ENCODE measurements at regions of chr3 and their contacts with region 1.

Region 1: DNA sequence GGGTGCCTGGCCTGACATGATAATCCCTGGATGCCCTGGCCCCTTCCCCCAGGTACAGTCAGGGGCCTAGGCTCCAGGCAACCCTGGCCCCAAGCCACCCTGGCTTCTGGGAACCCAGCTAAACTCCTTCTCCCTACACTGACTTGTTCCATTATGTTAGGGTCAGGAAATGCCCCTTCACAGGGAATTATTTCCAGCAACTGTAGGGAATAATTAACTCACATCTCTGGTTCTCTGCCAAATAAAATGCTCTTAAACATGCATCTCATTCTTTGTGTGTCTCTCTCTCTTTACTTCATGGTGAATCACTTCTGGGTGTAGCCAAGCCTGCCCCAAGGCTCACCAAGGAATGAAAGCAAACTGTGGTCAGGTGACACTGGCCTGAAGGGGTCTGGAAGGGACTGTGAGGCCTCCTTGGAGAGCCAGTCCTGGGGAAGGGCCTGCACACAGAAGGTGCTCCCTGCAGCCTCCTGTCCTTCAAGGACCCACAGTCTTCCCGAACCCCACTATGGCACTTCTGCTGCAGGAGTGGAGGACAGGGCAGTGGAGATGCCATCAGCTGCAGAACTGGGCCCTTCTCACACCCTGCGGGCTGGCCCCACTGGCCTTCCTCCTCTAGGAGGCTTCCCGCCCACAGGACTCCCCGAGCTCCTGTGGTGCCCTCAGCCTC is 17.6 kb downstream of the TKT start:
- DNase-seq: peak; percentile 98
- ATAC-seq: peak; percentile 89
- H3K4me3 ChIP-seq: no peak overlapping the region
- H3K27ac ChIP-seq: peak overlapping the region; percentile 91
- H3K4me1 ChIP-seq: peaks cover 33% of the 10 kb centered on the region
- H3K27me3 ChIP-seq: no peaks in the 10 kb centered on the region
- CTCF ChIP-seq: no peak

Region 2: DNA sequence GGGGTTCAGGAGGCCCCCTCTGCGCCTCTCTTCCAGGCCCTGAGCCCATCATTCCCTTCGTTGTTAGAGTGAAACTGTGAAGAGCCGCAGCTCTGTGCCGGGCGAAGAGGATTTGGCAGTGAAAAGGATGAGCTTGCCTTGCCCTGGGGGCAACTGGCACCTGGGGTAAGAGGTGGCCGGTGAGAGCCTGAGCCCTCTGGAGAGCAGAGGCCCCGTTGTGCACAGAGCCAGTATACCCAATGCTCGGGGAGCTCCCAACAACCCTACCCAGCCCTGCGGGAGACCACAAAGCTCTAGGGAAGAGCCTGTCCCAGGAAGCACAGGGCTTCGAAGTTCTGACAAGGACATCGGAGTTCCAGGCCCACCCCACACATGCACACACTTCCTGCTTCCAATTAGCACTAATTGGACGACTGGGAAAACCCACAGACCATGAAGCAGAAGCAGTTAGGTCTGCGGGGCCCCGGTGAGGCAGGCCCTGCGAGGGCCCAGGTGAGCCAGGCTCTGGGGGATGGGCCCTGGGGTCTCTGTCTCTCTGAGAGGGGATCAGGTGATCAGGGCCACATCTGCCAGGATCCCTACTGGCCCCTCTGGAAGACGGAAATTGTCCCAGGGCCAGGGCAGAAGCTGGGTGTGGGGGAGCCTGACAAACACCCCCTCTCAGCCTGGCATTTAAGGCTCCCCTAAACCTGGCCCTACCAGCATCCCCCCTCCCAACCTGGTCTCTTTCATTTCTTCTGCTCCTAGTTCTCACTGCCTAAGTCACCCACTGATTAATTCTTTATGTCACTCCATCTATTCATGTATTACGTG is 164.4 kb before region 1 on chr3:
- CTCF ChIA-PET with region 1: no interaction called
- POLR2A ChIA-PET with region 1: no interaction called
- intact Hi-C with region 1: no loop called
- DNase-seq: no peak
- ATAC-seq: no peak
- H3K4me3 ChIP-seq: no peak overlapping the region
- H3K27ac ChIP-seq: no peak overlapping the region
- H3K4me1 ChIP-seq: peaks cover 14% of the 10 kb centered on the region
- H3K27me3 ChIP-seq: no peaks in the 10 kb centered on the region
- CTCF ChIP-seq: no peak

Region 3: DNA sequence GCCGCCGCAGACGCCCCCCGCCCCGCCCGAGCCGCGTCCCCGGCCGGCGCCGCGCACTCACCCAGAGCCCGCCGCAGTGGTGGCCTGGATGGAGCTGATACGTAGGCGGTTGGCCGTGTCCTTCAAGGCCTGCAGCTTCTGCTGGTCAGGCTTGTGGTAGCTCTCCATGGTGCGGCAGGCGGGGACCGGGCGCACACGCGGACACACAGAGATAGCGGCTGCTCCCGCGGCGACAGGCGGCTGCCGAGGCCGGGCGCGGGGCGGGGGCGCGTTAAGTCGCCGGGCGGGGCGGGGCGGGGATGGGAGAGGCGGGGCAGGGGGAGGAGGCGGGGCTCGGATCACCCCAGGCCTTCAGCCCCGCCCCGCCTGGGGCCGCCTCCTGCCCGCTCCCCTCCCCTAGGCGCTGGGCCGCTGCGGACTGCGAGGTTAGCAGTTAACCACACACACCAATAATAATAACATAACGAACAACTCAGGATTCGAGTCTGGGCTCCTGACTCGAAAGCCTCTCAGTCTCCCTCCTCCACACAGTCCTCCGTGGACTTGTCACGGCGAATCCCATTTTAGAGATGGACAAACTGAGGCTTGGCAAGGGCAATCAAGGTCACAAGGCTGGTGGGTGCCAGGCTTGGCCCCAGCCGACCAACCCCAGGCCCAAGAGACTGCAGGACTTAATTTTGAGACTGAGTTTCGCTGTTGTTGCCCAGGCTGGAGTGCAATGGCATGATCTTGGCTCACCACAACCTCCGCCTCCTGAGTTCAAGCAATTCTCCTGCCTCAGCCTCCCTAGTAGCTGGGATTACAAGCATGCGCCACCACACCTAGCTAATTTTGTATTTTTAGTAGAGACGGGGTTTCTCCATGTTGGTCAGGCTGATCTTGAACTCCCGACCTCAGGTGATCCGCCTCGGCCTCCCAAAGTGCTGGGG is 17.9 kb after region 1 on chr3 and contains the start of gene TKT:
- CTCF ChIA-PET with region 1: no interaction called
- POLR2A ChIA-PET with region 1: no interaction called
- intact Hi-C with region 1: loop called (anchors 2 kb)
- DNase-seq: peak; percentile 84
- ATAC-seq: peak; percentile 73
- H3K4me3 ChIP-seq: peak within 1 kb of the TSS; percentile 96
- H3K27ac ChIP-seq: peak within 1 kb of the TSS; percentile 50
- H3K4me1 ChIP-seq: peaks cover 30% of the 10 kb centered on the region
- H3K27me3 ChIP-seq: no peaks in the 10 kb centered on the region
- CTCF ChIP-seq: no peak
- total RNA-seq, gene TKT: 380 and 486 TPM in 2 replicates